GM23248 (cell line): ENCODE measurements at regions of chr4 and their contacts with region 1.

Region 1: GRCh38 chr4:115537387-115537786 is 424.0 kb upstream of the NDST4 start:
- DNase-seq: peak; percentile 46
- H3K4me3 ChIP-seq: no peak overlapping the region
- H3K27ac ChIP-seq: no peak overlapping the region
- H3K4me1 ChIP-seq: no peaks in the 10 kb centered on the region
- H3K27me3 ChIP-seq: no peaks in the 10 kb centered on the region

Region 2: GRCh38 chr4:115113125-115114106 is 424.0 kb before region 1 on chr4 and contains the start of gene NDST4:
- in situ Hi-C with region 1: loop called (anchors 25 kb)
- DNase-seq: peak; percentile 54
- H3K4me3 ChIP-seq: peak within 1 kb of the TSS; percentile 61
- H3K27ac ChIP-seq: no peak within 1 kb of the TSS
- H3K4me1 ChIP-seq: no peaks in the 10 kb centered on the region
- H3K27me3 ChIP-seq: no peaks in the 10 kb centered on the region
- total RNA-seq, gene NDST4: not detected in 2 replicates

Region 3: GRCh38 chr4:115187136-115187535 is 350.3 kb before region 1 on chr4:
- in situ Hi-C with region 1: no loop called
- DNase-seq: peak; percentile 42
- H3K4me3 ChIP-seq: no peak overlapping the region
- H3K27ac ChIP-seq: no peak overlapping the region
- H3K4me1 ChIP-seq: peaks cover 3% of the 10 kb centered on the region; the same call in 1 of the 2 replicates
- H3K27me3 ChIP-seq: no peaks in the 10 kb centered on the region

Region 4: DNA sequence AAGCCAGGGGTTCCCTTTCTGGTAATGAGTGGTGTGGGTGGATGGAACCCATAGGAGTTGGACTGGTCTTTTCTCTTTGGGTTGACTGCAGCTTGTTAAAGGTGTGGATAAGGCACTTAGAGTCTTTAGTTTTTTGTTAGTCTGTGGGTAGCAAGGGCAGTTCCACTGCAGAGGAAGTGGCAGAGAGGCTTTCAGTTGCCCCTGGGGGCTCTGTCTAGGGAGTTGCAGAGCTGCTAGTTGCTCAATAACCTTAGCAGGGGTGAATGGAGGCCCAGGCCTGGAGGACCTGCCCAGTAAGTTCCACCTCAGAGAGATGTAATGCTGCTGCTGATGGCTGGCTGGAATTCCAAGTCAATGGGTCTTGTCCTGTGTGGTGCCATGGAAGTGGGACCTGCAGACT is 141.4 kb before region 1 on chr4:
- in situ Hi-C with region 1: no loop called
- DNase-seq: no peak
- H3K4me3 ChIP-seq: no peak overlapping the region
- H3K27ac ChIP-seq: no peak overlapping the region
- H3K4me1 ChIP-seq: no peaks in the 10 kb centered on the region
- H3K27me3 ChIP-seq: no peaks in the 10 kb centered on the region

Region 5: DNA sequence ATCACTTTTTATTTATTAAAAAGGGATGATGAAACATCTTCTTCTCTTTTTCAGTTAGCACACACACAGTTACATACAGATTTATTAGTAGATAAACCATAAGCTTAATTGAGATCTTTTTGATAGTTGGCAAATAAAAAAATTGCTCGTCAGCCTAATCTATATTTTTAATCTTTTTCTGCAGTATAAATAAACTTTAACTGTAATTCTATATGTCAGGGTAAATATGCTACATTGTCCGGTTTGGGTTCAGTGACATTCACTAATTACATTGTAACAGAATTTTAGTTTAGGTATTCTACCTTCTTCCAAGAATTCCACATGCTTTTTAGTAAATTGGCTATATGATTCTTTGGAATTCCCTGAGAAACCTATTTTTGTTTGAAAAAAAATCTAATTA is 258.8 kb after region 1 on chr4:
- in situ Hi-C with region 1: no loop called
- DNase-seq: no peak
- H3K4me3 ChIP-seq: no peak overlapping the region
- H3K27ac ChIP-seq: no peak overlapping the region
- H3K4me1 ChIP-seq: no peaks in the 10 kb centered on the region
- H3K27me3 ChIP-seq: no peaks in the 10 kb centered on the region